ENCODE measurements at regions of chr3 and their contacts with region 1.

Region 1: DNA sequence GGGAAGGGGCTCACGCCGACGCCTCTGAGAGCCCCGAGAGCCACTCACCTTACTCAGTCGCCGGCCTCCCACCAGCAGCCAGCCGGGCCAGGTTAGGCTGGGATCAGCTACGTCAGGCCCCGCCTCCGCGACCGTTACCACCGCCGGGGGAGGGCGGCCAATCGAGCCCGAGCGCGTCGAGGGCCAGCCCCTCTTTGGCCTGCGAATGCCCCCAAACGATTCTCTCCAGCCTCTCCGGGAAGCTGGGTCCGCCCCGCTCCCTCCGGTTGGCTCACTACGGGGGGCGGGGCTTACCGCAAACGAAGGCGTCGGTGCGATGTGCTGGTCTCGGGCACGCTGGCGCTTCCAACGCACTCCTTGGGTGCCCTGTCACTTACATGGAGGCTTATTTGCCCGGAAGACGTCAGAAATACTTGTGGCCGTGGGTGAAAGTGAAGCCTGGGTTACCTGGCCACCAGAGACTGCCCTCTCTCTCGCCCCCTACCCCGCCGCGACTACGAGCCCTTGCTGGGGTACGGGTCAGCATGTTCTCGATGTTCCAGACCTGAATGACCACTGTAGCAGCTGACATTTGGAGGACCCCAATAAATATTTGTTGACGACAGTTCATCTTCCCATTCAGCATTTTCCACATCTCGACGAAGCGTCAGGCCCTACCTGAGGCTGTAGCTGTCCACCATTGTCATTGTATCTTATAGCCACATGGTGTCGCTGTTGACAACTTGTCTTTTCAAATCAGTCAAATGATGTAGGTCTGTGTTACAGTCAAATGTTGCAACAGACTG is at the start of gene CEP70:
- DNase-seq: peak; percentile 95
- ATAC-seq: peak; percentile 99
- total RNA-seq, gene CEP70: 28.8 to 34.1 TPM

Region 2: DNA sequence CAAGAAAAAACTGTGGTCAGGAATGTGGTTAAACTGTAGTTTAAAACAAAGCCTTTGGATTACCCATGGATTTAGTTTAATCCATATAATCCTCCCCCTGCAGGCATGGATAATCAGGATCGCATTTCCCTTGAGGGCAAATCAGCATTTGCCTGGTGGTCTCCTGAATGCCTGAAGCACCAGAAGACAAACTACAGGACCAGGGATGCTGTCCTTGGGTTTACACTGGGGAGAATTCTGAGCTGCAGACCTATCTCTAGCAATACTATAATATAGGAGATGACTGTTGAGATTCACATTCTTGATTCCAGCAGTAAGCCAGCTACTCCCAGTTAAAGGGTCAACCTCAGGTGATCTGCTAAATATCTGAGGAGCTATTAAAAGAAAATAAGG is 229.8 kb after region 1 on chr3:
- intact Hi-C with region 1: no loop called
- DNase-seq: no peak
- ATAC-seq: no peak

Region 3: GRCh38 chr3:138923531-138923994 is 329.2 kb after region 1 on chr3:
- intact Hi-C with region 1: loop called in 1 of 2 experiments (anchors 2 kb)
- DNase-seq: peak; percentile 78
- ATAC-seq: peak; percentile 82 to 86